ENCODE measurements at regions of chr14 and their contacts with region 1.

Region 1: DNA sequence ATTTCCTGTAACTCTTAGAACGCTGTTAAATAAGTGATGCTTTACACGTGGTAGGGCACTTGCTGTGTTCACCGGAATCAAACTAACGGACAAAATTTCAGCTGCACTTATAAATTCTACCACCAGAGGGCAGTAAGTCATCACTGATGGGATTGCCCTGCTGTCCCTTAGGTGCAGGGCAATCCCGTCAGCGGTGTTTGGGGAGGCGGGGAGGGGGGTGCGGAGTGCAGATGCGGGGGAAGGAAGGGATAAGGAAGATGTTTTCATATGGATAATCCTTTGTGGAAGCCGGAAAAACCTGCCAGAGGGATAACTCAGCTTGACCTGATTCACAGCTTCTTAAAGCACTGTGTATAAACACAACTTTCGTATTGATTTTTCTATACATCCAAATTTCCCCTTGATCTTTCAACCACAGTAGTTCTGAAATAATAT is 21.7 kb upstream of the SLC10A1 start:
- DNase-seq: no peak

Region 2: GRCh38 chr14:69838881-69839416 is 20.2 kb after region 1 on chr14:
- intact Hi-C with region 1: no loop called
- DNase-seq: no peak

Region 3: GRCh38 chr14:69953266-69953915 is 134.6 kb after region 1 on chr14:
- intact Hi-C with region 1: no loop called
- DNase-seq: no peak

Region 4: GRCh38 chr14:70027785-70028428 is 209.1 kb after region 1 on chr14:
- intact Hi-C with region 1: loop called (anchors 2 to 5 kb)
- DNase-seq: peak; percentile 94

Measured in posterior vena cava (tissue), 2 donors.